ENCODE measurements at regions of chr15 and their contacts with region 1.

Region 1: GRCh38 chr15:85080329-85080728 is 98.7 kb downstream of the PDE8A start:
- DNase-seq: no peak
- H3K4me3 Mint-ChIP-seq: no peak overlapping the region
- H3K27ac Mint-ChIP-seq: no peak overlapping the region
- H3K4me1 Mint-ChIP-seq: no peaks in the 10 kb centered on the region
- H3K27me3 Mint-ChIP-seq: no peaks in the 10 kb centered on the region
- CTCF ChIP-seq: no peak

Region 2: GRCh38 chr15:85480923-85481322 is 400.6 kb after region 1 on chr15:
- CTCF ChIA-PET with region 1: interaction called, 11 read pairs
- intact Hi-C with region 1: no loop called
- DNase-seq: no peak
- H3K4me3 Mint-ChIP-seq: no peak overlapping the region
- H3K27ac Mint-ChIP-seq: no peak overlapping the region
- H3K4me1 Mint-ChIP-seq: peaks cover 46% of the 10 kb centered on the region
- H3K27me3 Mint-ChIP-seq: no peaks in the 10 kb centered on the region
- CTCF ChIP-seq: no peak